ENCODE measurements at regions of chr14 and their contacts with region 1.

Region 1: DNA sequence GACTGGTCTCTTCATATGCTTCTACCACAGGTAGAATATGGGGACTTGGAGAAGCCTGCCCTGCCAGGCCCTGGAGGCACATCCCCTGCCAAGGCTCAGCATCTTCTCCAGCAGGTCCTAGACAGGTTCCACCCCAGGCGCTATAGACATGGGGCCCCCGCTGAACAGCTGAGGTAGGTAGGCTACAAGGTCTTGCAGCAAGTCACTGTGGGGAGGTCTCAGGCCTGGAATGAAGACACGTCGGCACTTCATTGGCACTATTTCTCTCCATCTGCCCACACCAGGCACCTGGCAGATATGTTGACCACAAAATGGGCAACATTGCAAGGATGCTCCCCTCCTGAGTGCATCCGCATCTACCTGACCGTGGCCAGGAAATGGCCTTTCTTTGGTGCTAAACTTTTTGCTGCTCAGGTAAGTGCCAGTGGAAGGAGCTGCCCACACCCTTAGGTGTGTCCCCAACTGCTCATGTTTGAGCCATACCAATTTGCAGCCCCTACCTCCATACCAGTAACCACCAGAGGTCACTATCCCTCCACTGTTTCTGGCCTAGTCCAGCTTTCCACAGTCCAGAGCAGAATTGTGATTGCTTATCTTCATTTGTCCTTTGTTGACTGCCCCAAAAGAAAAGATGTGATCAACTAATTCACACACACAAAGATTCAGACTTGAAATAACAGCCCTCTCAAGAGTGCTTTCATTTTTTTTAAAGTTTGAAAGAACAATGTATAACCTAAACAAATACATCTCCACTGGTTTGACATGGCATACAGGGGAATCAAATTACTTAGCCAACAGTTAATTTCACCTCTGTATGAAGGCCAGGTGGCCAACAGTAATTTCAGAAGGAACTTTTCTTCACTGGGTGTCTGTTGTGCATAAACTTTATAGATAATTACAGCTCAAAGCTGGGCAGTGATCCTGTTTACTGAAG is 16.1 kb downstream of the PIGH start:
- DNase-seq: peak in 3 of 4 donors; percentile 46 to 60 (median 53)
- ATAC-seq: peak; percentile 74
- H3K4me3 ChIP-seq: no peak overlapping the region
- H3K27ac ChIP-seq: no peak overlapping the region
- H3K4me1 ChIP-seq: no peaks in the 10 kb centered on the region
- H3K27me3 ChIP-seq: no peaks in the 10 kb centered on the region
- CTCF ChIP-seq: peak; percentile 37 to 74 (median 63)
- POLR2A ChIP-seq: no peak

Region 2: GRCh38 chr14:67446120-67447032 is 137.6 kb before region 1 on chr14:
- intact Hi-C with region 1: no loop called
- DNase-seq: peak in 2 of 4 donors; percentile 44 to 51
- ATAC-seq: peak; percentile 25
- H3K4me3 ChIP-seq: no peak overlapping the region
- H3K27ac ChIP-seq: peak overlapping the region; percentile 4 to 59 (median 38)
- H3K4me1 ChIP-seq: peaks cover 33% of the 10 kb centered on the region
- H3K27me3 ChIP-seq: no peaks in the 10 kb centered on the region
- CTCF ChIP-seq: no peak
- POLR2A ChIP-seq: no peak

Region 3: DNA sequence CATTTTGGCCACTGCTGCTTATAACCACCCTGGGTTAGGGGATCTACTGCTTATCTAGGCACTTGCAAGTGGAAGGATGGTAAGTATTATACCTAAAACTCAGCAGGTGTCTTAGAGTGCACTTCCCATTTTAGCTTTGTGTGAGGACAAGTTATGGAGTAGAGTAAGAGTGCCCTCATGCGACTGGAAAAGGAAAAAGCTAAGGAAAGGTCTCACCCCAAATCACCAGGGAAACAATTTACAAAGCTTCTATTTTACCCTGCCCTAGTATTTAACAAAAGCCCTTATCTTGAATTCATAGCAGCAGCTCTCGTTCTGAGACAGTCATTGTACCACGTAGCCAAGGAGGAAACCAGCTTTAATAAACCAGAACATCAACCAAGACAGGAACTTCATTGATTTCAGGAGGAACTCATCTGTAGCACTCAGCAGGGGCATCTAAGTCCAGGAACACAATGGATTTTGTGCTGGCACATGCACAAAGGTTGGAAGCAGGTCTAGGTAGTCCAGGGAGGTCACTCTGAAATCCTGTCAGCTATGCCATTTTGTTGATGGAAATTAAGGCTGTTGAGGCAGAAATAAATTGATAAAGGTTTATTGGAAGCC is 120.6 kb after region 1 on chr14:
- intact Hi-C with region 1: loop called (anchors 10 kb)
- DNase-seq: peak; percentile 20 to 55 (median 34)
- ATAC-seq: peak; percentile 90
- H3K4me3 ChIP-seq: no peak overlapping the region
- H3K27ac ChIP-seq: peak overlapping the region in 2 of 4 donors; percentile 4 to 38
- H3K4me1 ChIP-seq: peaks cover 12% of the 10 kb centered on the region
- H3K27me3 ChIP-seq: no peaks in the 10 kb centered on the region
- CTCF ChIP-seq: peak; percentile 55 to 88 (median 83)
- POLR2A ChIP-seq: no peak